ENCODE measurements at regions of chr3 and their contacts with region 1.

Region 1: GRCh38 chr3:186990878-186991308 is 60.6 kb downstream of the ST6GAL1 start:
- DNase-seq: no peak
- ATAC-seq: no peak
- H3K4me3 ChIP-seq: no peak overlapping the region
- H3K4me3 Mint-ChIP-seq: peak overlapping the region; percentile 26
- H3K27ac ChIP-seq: peak overlapping the region; percentile 40 to 86
- H3K27ac Mint-ChIP-seq: peak overlapping the region; percentile 92
- H3K4me1 ChIP-seq: peaks cover 76 to 97% of the 10 kb centered on the region in 2 donors
- H3K4me1 Mint-ChIP-seq: peaks cover 89% of the 10 kb centered on the region
- H3K27me3 ChIP-seq: no peaks in the 10 kb centered on the region
- H3K27me3 Mint-ChIP-seq: no peaks in the 10 kb centered on the region
- CTCF ChIP-seq: no peak

Region 2: GRCh38 chr3:186609247-186609868 is 381.5 kb before region 1 on chr3:
- CTCF ChIA-PET with region 1: no interaction called
- POLR2A ChIA-PET with region 1: no interaction called
- intact Hi-C with region 1: no loop called
- DNase-seq: no peak
- ATAC-seq: no peak
- H3K4me3 ChIP-seq: no peak overlapping the region
- H3K4me3 Mint-ChIP-seq: no peak overlapping the region
- H3K27ac ChIP-seq: no peak overlapping the region
- H3K27ac Mint-ChIP-seq: no peak overlapping the region
- H3K4me1 ChIP-seq: peaks cover 3 to 4% of the 10 kb centered on the region in 2 donors
- H3K4me1 Mint-ChIP-seq: peaks cover 1% of the 10 kb centered on the region
- H3K27me3 ChIP-seq: peaks cover 0 to 16% (median 4%) of the 10 kb centered on the region in 4 experiments
- H3K27me3 Mint-ChIP-seq: peaks cover 29% of the 10 kb centered on the region
- CTCF ChIP-seq: no peak

Region 3: DNA sequence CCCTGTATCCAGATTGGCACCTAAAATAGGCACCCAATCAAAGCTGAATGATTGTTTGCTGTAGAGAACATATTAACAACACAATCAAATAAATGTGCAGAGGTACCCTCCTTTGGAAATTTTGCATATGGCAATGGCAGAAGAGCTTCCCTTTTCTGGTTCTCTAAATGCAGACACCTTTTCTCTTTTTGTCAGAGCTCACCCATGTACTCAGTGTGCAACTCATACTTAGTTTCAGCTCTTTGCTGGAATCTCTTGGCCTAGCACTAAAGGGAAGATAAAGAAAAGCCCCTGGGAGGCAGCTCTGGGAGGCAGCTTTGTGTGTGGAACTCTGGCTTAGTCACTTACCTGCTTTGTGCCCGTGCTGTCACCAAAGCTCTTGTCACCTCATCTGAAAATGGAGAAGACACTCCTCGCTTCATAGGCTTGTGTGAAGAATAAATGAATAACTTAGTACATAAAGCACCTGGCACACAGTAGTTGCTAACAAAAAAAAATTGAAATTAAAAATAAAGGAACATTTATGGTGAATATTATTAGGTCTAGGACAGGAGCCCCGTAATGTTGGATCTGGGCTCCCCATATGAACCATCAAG is 31.8 kb before region 1 on chr3:
- CTCF ChIA-PET with region 1: interaction called, 3 read pairs
- POLR2A ChIA-PET with region 1: interaction called, 5 read pairs
- intact Hi-C with region 1: loop called (anchors 5 kb)
- DNase-seq: peak; percentile 61
- ATAC-seq: peak; percentile 72
- H3K4me3 ChIP-seq: no peak overlapping the region
- H3K4me3 Mint-ChIP-seq: peak overlapping the region; percentile 45
- H3K27ac ChIP-seq: peak overlapping the region; percentile 11 to 71
- H3K27ac Mint-ChIP-seq: peak overlapping the region; percentile 86
- H3K4me1 ChIP-seq: peaks cover 33 to 40% of the 10 kb centered on the region in 2 donors
- H3K4me1 Mint-ChIP-seq: peaks cover 73% of the 10 kb centered on the region
- H3K27me3 ChIP-seq: no peaks in the 10 kb centered on the region
- H3K27me3 Mint-ChIP-seq: no peaks in the 10 kb centered on the region
- CTCF ChIP-seq: no peak